T-cell (primary cell): ENCODE measurements at regions of chr16 and their contacts with region 1.

Region 1: DNA sequence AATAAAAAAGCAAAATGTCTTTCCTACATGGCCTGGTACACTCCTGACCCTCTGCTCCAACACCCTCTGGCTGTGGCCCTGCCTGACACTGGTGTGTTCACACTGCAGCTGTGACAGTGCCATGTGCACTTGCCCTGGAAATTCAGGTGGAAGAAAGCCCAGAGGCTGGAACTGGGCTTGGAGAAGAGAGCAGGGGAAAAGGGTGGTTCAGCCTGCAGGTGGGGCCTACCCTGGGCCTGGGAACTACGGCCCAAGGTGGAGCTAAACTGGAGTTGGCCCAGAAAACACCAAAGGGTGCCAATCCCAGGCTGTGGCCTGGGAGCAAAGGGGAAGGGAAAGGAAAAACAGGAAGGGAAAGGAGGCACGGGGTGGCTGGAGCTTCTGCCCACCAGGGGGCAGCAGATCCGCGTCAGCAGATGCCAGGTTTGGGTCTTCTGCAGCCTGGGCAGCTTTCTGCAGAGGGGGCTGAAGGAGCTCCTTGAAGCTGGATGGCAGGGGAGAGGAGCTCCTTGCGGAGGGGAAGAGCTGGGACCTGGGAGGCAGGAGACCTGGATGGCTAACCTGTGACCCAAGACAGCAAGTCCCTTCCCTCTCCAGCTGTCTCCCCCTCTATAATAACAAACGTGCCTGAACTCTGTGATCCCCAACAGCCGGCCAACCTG is 15.4 kb upstream of the CTCF start:
- DNase-seq: peak in 33 of 35 experiments; percentile 37 to 88 (median 63)
- ATAC-seq: peak; percentile 39 to 52 (median 50)
- H3K4me3 ChIP-seq: peak overlapping the region; percentile 10 to 28
- H3K4me3 Mint-ChIP-seq: peak overlapping the region; percentile 67 to 73 (median 72)
- H3K27ac ChIP-seq: peak overlapping the region; percentile 67
- H3K27ac Mint-ChIP-seq: peak overlapping the region; percentile 99
- H3K4me1 ChIP-seq: peaks cover 16 to 50% of the 10 kb centered on the region in 2 experiments
- H3K4me1 Mint-ChIP-seq: peaks cover 51 to 68% (median 58%) of the 10 kb centered on the region in 3 donors
- H3K27me3 ChIP-seq: no peaks in the 10 kb centered on the region
- H3K27me3 Mint-ChIP-seq: no peaks in the 10 kb centered on the region

Region 2: GRCh38 chr16:66751303-66751991 is 795.4 kb before region 1 on chr16 and contains the start of gene DYNC1LI2:
- CTCF ChIA-PET with region 1: interaction called in 1 of 2 experiments, 11 read pairs
- POLR2A ChIA-PET with region 1: no interaction called
- DNase-seq: peak; percentile 63 to 89 (median 78)
- ATAC-seq: peak; percentile 93 to 98 (median 95)
- H3K4me3 ChIP-seq: peak within 1 kb of the TSS; percentile 76 to 94
- H3K4me3 Mint-ChIP-seq: peak within 1 kb of the TSS; percentile 85 to 89 (median 87)
- H3K27ac ChIP-seq: peak within 1 kb of the TSS; percentile 12
- H3K27ac Mint-ChIP-seq: peak within 1 kb of the TSS; percentile 86 to 92
- H3K4me1 ChIP-seq: peaks cover 16 to 31% of the 10 kb centered on the region in 2 experiments
- H3K4me1 Mint-ChIP-seq: peaks cover 33 to 46% (median 40%) of the 10 kb centered on the region in 3 donors
- H3K27me3 ChIP-seq: peaks cover 0 to 6% of the 10 kb centered on the region in 2 experiments
- H3K27me3 Mint-ChIP-seq: peaks cover 0 to 14% of the 10 kb centered on the region in 2 donors
- total RNA-seq, gene DYNC1LI2: 69.9 to 92.1 (median 81.3) TPM

Region 3: DNA sequence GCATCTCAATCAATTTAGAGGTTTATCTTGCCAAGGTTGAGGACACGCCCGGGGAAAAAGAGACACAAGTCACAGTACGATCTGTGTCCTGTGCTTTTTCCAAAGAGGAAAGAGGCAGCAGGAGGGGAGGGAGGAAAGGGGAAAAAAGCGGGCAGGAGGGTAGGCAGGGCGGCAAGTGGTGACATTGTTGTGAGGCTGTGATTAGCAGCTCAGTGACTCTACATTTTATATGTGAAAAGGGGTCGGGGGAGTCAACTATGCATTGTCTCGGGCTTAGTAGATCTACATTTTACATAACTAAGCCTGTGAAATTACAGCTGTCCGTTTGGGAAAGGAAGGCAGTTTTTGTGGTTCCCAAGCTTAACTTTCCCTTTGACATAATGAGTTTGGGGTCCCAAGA is 40.4 kb before region 1 on chr16:
- CTCF ChIA-PET with region 1: no interaction called
- POLR2A ChIA-PET with region 1: no interaction called
- DNase-seq: no peak
- ATAC-seq: no peak
- H3K4me3 ChIP-seq: no peak overlapping the region
- H3K4me3 Mint-ChIP-seq: peak overlapping the region in 1 of 3 donors; percentile 14
- H3K27ac ChIP-seq: peak overlapping the region; percentile 49
- H3K27ac Mint-ChIP-seq: peak overlapping the region; percentile 86 to 90
- H3K4me1 ChIP-seq: peaks cover 23 to 62% of the 10 kb centered on the region in 2 experiments
- H3K4me1 Mint-ChIP-seq: peaks cover 54 to 64% (median 63%) of the 10 kb centered on the region in 3 donors
- H3K27me3 ChIP-seq: no peaks in the 10 kb centered on the region
- H3K27me3 Mint-ChIP-seq: no peaks in the 10 kb centered on the region

Region 4: DNA sequence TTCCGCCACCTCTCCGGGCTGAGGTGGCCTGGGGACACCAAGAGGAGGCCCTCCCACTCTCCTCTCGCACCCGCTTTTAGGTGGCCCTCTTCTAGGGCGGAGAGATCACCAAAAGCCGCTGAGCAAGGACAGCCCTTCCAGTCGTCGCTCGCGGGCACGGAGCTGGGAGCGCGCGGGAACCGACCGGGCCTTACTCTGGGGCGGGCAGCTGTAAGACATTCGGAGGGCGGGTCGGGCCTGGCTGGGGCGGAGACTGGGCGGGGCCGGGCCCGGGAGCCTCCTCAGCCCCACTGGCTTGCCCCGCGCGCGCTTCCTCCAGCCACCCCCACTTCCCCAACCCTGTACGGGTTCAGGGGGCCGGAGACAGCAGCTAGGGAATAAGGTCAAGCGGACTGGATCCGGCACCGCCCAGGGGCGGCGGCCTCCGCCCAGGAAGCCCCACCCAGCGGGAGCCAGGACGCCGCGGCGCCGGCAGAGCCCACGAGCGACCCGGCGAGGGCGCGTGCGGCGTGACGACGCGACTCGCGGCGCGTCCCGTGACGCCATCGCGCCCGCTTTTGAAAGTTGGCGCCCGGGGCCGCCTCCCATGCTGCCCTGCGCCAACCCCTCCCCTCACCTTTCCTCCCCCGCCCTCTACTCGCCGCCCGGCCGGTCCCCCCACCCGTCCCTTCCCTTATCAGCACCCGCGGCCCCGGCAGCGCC is 15.1 kb after region 1 on chr16:
- CTCF ChIA-PET with region 1: interaction called, 13 to 64 read pairs
- POLR2A ChIA-PET with region 1: interaction called, 3 to 5 read pairs
- DNase-seq: peak; percentile 92 to 98 (median 96)
- ATAC-seq: peak; percentile 74 to 81 (median 76)
- H3K4me3 ChIP-seq: peak overlapping the region; percentile 55 to 67
- H3K4me3 Mint-ChIP-seq: peak overlapping the region; percentile 85 to 88 (median 86)
- H3K27ac ChIP-seq: peak overlapping the region; percentile 69
- H3K27ac Mint-ChIP-seq: peak overlapping the region; percentile 92 to 94
- H3K4me1 ChIP-seq: peaks cover 21 to 47% of the 10 kb centered on the region in 2 experiments
- H3K4me1 Mint-ChIP-seq: peaks cover 38 to 60% (median 45%) of the 10 kb centered on the region in 3 donors
- H3K27me3 ChIP-seq: no peaks in the 10 kb centered on the region
- H3K27me3 Mint-ChIP-seq: no peaks in the 10 kb centered on the region

Region 5: DNA sequence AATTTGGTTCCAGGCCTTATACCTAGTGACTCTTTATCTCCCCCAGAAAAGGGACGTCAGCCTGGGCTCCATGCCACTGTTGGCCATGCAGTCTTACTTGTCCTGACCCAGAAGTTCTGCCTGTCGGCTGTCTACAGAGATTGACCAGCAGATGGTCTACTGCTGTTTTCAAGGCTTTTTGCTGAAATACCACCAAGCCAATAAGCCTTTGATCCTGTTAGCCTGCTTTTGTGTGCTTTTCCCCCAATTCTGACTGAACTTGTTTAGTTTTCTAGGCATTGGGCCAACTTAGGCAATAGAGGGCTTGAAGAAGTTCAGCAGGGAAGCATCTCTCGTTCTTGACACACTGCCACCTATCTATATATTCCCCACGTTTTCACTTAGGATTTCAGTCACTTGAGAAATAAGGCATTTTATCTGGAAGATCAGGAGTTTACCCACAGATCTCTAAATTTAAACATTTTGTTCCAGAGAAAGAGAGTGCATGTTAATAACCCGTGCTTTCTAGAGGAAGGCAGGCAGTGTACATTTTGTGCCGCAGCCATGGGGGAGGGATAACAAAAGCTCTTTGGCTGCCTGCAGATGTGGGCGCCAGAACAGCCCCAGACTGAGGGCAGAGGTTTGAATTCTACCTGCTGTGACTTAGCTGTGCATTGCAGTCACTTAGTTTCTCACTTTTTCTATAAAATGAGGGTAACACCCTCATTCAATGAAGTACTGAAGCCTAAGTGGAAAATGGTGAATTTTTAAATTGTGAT is 85.7 kb after region 1 on chr16:
- CTCF ChIA-PET with region 1: interaction called in 1 of 2 experiments, 5 read pairs
- POLR2A ChIA-PET with region 1: interaction called in 1 of 2 experiments, 11 read pairs
- DNase-seq: no peak
- ATAC-seq: no peak
- H3K4me3 ChIP-seq: no peak overlapping the region
- H3K4me3 Mint-ChIP-seq: no peak overlapping the region
- H3K27ac ChIP-seq: no peak overlapping the region
- H3K27ac Mint-ChIP-seq: peak overlapping the region in 1 of 2 donors; percentile 49
- H3K4me1 ChIP-seq: no peaks in the 10 kb centered on the region
- H3K4me1 Mint-ChIP-seq: no peaks in the 10 kb centered on the region
- H3K27me3 ChIP-seq: no peaks in the 10 kb centered on the region
- H3K27me3 Mint-ChIP-seq: no peaks in the 10 kb centered on the region

Region 6: GRCh38 chr16:67641779-67642708 is 95.2 kb after region 1 on chr16:
- CTCF ChIA-PET with region 1: interaction called, 14 to 44 read pairs
- POLR2A ChIA-PET with region 1: interaction called in 1 of 2 experiments, 3 read pairs
- DNase-seq: no peak
- ATAC-seq: no peak
- H3K4me3 ChIP-seq: no peak overlapping the region
- H3K4me3 Mint-ChIP-seq: no peak overlapping the region
- H3K27ac ChIP-seq: no peak overlapping the region
- H3K27ac Mint-ChIP-seq: peak overlapping the region; percentile 11 to 39
- H3K4me1 ChIP-seq: peaks cover 0 to 28% of the 10 kb centered on the region in 2 experiments
- H3K4me1 Mint-ChIP-seq: peaks cover 6 to 17% (median 16%) of the 10 kb centered on the region in 3 donors
- H3K27me3 ChIP-seq: no peaks in the 10 kb centered on the region
- H3K27me3 Mint-ChIP-seq: no peaks in the 10 kb centered on the region

Region 7: GRCh38 chr16:67667817-67668494 is 121.1 kb after region 1 on chr16:
- CTCF ChIA-PET with region 1: interaction called, 9 to 14 read pairs
- POLR2A ChIA-PET with region 1: no interaction called
- DNase-seq: peak; percentile 62 to 89 (median 80)
- ATAC-seq: peak; percentile 86 to 90 (median 87)
- H3K4me3 ChIP-seq: peak overlapping the region; percentile 63 to 64
- H3K4me3 Mint-ChIP-seq: peak overlapping the region; percentile 79 to 87 (median 84)
- H3K27ac ChIP-seq: peak overlapping the region; percentile 43
- H3K27ac Mint-ChIP-seq: peak overlapping the region; percentile 63 to 72
- H3K4me1 ChIP-seq: peaks cover 5 to 26% of the 10 kb centered on the region in 2 experiments
- H3K4me1 Mint-ChIP-seq: peaks cover 11 to 36% (median 22%) of the 10 kb centered on the region in 3 donors
- H3K27me3 ChIP-seq: no peaks in the 10 kb centered on the region
- H3K27me3 Mint-ChIP-seq: no peaks in the 10 kb centered on the region

Region 8: GRCh38 chr16:68126395-68126794 is 579.5 kb after region 1 on chr16:
- CTCF ChIA-PET with region 1: no interaction called
- POLR2A ChIA-PET with region 1: no interaction called
- DNase-seq: no peak
- ATAC-seq: no peak
- H3K4me3 ChIP-seq: no peak overlapping the region
- H3K4me3 Mint-ChIP-seq: no peak overlapping the region
- H3K27ac ChIP-seq: no peak overlapping the region
- H3K27ac Mint-ChIP-seq: peak overlapping the region; percentile 57 to 64
- H3K4me1 ChIP-seq: peaks cover 0 to 36% of the 10 kb centered on the region in 2 experiments
- H3K4me1 Mint-ChIP-seq: peaks cover 49 to 67% (median 65%) of the 10 kb centered on the region in 3 donors
- H3K27me3 ChIP-seq: no peaks in the 10 kb centered on the region
- H3K27me3 Mint-ChIP-seq: no peaks in the 10 kb centered on the region